ENCODE measurements at regions of chr2 and their contacts with region 1.

Region 1: GRCh38 chr2:95402370-95403203 is at the start of gene FAHD2A:
- DNase-seq: peak; percentile 98
- H3K4me3 ChIP-seq: peak within 1 kb of the TSS; percentile 73 to 98 (median 92)
- H3K27ac ChIP-seq: peak within 1 kb of the TSS; percentile 82 to 92 (median 89)
- H3K4me1 ChIP-seq: peaks cover 0 to 27% (median 20%) of the 10 kb centered on the region in 4 donors
- H3K27me3 ChIP-seq: no peaks in the 10 kb centered on the region
- CTCF ChIP-seq: no peak
- EP300 ChIP-seq: peak in 1 of 4 donors; percentile 12
- POLR2A ChIP-seq: peak; percentile 61 to 75
- total RNA-seq, gene FAHD2A: 8.9 to 19.4 (median 11.8) TPM

Region 2: DNA sequence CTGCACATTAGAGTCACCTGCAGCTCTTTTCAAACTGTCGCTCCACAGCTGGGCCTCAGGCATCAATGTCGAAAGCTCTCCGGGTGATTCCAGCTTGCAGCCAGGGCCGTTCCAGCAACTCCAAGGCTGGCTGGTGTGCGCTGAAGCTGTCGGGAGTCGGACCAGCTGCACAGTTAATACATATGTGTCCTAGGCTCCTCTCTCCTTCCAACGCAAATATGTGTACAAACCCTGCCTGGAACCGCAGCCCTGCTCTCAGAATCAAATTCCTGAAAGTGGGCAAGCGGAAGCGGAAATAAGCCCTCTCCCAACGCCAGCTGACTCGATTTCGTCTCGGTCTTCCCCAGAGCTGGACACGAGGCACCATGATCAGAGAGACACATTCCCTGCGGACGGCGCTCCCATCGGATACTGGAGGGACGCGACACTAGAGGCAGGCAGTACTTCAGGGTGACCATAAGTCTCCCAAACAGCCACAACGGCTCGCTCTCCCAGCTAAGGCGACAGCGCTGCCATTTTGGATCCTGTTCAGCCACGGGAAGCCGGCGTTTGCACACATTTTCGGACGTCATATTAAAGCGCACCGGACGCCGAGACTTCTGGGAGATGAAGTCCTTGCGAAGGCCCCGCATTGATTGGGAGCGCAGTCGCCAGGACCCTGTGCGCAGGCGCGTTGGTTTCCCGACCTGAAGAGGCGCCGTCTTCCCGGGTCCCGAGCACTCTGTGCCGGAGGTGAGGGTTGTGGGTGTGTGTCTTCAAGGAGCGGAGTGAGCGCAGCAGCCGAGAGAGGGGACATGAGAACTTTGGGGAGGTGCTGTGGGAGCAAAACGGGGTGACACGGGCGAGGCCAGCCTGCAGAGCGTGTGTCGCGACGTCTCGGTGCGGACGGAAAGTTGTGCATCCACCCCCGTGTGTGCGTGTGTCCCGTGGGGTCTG is 237.2 kb before region 1 on chr2 and contains the start of gene ZNF2:
- intact Hi-C with region 1: loop called (anchors 2 kb)
- DNase-seq: peak; percentile 99
- H3K4me3 ChIP-seq: peak within 1 kb of the TSS; percentile 66 to 82 (median 72)
- H3K27ac ChIP-seq: peak within 1 kb of the TSS; percentile 90 to 97 (median 91)
- H3K4me1 ChIP-seq: peaks cover 0 to 24% (median 18%) of the 10 kb centered on the region in 4 donors
- H3K27me3 ChIP-seq: no peaks in the 10 kb centered on the region
- CTCF ChIP-seq: no peak
- EP300 ChIP-seq: no peak
- POLR2A ChIP-seq: peak; percentile 32 to 49
- total RNA-seq, gene ZNF2: 2.5 to 5.8 (median 3.3) TPM

Measured in sigmoid colon (tissue), 7 donors.